Mammary epithelial cell (primary cell): ENCODE measurements at regions of chr12 and their contacts with region 1.

Region 1: GRCh38 chr12:114013575-114014345 is 47.6 kb upstream of the RBM19 start:
- DNase-seq: peak; percentile 1
- H3K4me3 ChIP-seq: no peak overlapping the region
- H3K27ac ChIP-seq: no peak overlapping the region
- H3K4me1 ChIP-seq: no peaks in the 10 kb centered on the region
- H3K27me3 ChIP-seq: no peaks in the 10 kb centered on the region
- CTCF ChIP-seq: peak in 1 of 2 donors; percentile 18

Region 2: DNA sequence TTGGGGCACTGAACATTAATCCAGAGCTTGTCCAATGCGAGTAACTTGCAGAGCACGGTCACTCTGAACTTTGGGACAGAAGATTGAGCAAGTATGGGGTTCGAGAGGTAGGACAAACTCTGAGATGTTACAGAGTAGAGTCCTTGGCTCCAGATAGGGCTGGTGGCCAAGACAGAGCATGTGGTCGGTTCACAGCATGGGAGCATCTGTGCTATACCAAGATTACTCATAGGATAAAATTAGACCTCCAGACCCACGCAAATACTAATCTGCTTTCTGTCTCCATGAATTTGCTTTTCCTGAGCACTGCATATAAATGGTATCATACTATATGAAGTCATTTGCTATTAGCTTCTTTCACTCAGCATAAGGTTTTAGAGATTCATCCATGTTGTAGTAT is 485.6 kb after region 1 on chr12:
- CTCF ChIA-PET with region 1: no interaction called
- dilution Hi-C with region 1: loop called (anchors 5 kb)
- in situ Hi-C with region 1: no loop called
- intact Hi-C with region 1: no loop called
- DNase-seq: no peak
- H3K4me3 ChIP-seq: no peak overlapping the region
- H3K27ac ChIP-seq: no peak overlapping the region
- H3K4me1 ChIP-seq: no peaks in the 10 kb centered on the region
- H3K27me3 ChIP-seq: no peaks in the 10 kb centered on the region
- CTCF ChIP-seq: no peak